ENCODE measurements at regions of chr1 and their contacts with region 1.

Region 1: GRCh38 chr1:91879733-91880132 is 6.2 kb downstream of the TGFBR3 start:
- DNase-seq: no peak
- ATAC-seq: no peak
- H3K4me3 ChIP-seq: no peak overlapping the region
- H3K4me1 ChIP-seq: peaks cover 3% of the 10 kb centered on the region
- CTCF ChIP-seq: no peak

Region 2: DNA sequence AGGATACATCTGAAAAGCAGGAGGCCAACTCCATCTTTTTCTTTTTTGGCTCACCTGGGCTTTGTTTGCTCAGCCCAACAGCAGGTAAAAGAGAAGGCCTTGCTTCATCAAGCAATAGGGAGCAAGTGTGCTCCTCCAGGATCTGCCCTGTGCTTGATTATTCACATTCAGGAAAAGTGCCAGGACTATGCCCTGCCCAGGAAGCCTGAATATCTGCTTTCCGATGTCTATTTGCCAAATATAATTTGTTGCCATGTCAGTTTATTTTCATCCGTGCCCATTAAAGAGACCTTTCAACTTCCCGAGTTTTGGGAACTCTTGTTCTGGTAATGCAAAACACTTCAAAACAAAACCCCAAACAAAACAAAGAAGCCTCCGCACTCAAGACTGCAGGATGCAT is 193.7 kb before region 1 on chr1:
- intact Hi-C with region 1: loop called in 1 of 2 experiments (anchors 2 kb)
- DNase-seq: peak in 1 of 3 donors; percentile 18
- ATAC-seq: peak; percentile 65
- H3K4me3 ChIP-seq: no peak overlapping the region
- H3K4me1 ChIP-seq: peaks cover 39% of the 10 kb centered on the region
- CTCF ChIP-seq: no peak

Region 3: DNA sequence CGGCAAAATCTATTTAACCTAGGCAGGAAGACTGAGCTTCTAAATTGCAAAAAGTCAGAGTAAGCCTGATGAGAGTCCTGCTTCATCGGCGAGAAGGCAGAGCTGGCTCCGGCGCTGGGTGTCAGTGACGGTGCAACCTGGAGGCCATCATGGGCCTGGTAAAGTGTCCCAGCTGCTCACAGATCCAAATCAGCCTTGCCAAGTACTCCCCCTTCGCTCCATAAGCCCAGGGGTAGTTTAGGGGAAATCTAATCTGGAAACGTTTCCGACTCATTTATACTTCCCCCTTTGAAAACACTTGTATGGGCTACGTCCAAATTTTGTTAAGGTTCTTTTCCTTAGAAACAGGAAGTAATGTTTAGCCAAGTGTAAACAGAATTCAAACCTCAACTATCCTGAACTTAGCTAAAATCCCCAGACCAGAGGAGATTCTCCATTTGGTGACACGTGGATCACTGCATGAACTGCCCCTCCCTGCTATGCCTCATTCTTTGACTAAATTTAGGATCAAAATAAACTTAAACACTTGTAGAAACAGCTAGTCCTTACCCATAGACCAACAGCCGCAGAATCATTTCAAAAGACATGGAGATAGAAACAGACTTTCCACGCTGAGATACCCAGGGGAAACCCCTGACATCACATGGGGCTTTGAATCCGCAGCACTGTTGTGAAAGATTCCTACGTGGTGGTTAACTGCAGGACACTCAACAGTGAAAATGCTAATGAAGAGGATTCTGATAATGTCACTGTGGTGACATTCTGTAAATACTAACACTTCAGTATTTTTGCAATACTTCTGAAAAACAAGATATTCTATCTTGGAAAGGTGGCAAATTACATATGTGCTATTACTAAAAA is 166.5 kb before region 1 on chr1:
- intact Hi-C with region 1: no loop called
- DNase-seq: peak in 2 of 3 donors; percentile 27 to 36
- ATAC-seq: peak; percentile 60
- H3K4me3 ChIP-seq: no peak overlapping the region
- H3K4me1 ChIP-seq: no peaks in the 10 kb centered on the region
- CTCF ChIP-seq: no peak